HepG2 (cell line): ENCODE measurements at regions of chr4 and their contacts with region 1.

Region 1: DNA sequence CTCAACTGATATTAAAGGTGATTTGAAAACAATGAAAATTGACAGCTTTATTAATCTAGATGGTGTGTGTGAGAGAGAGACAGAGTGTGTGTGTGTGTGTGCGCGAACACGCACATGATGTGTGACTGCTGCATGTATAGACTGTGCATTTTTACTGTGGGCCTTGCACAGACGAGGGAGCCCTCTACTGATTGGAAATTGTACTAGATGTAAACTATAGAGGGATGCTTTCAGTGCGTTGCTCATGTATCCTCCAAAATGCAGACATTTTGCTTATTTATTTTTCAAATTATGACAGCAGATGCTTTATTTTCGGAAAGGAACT is 168.4 kb upstream of the GK2 start:
- DNase-seq: peak; percentile 21
- ATAC-seq: peak; percentile 93
- H3K4me3 ChIP-seq: no peak overlapping the region
- H3K27ac ChIP-seq: no peak overlapping the region
- H3K4me1 ChIP-seq: no peaks in the 10 kb centered on the region
- H3K27me3 ChIP-seq: no peaks in the 10 kb centered on the region
- CTCF ChIP-seq: peak; percentile 61
- EP300 ChIP-seq: no peak
- POLR2A ChIP-seq: no peak
- RAD21 ChIP-seq: no peak

Region 2: DNA sequence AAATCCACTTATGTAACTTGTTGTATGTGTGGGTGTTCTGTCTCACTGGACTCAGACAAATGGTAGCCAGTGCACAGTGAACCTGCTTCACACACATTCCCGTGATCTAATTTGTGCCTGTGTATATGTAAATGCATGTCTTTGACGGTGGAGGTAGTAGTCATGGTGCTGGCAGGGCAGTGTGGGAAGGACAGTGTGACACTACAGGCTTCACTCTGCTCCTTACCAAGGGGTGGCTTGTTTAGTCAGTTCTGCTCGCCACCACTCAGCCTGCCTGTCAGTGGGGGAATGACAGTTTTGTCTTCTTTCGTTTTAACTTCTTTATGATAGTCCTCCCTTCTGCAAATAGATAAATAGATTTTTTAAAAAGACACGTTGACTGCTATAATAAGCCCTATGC is 619.4 kb before region 1 on chr4:
- CTCF ChIA-PET with region 1: interaction called, 11 read pairs
- POLR2A ChIA-PET with region 1: no interaction called
- in situ Hi-C with region 1: loop called (anchors 5 kb)
- intact Hi-C with region 1: loop called (anchors 1 kb)
- DNase-seq: no peak
- ATAC-seq: peak; percentile 89
- H3K4me3 ChIP-seq: no peak overlapping the region
- H3K27ac ChIP-seq: no peak overlapping the region
- H3K4me1 ChIP-seq: no peaks in the 10 kb centered on the region
- H3K27me3 ChIP-seq: peaks cover 0 to 8% of the 10 kb centered on the region in 2 experiments; a peak in 1 of 5 replicates
- CTCF ChIP-seq: no peak
- EP300 ChIP-seq: no peak
- POLR2A ChIP-seq: no peak
- RAD21 ChIP-seq: no peak

Region 3: DNA sequence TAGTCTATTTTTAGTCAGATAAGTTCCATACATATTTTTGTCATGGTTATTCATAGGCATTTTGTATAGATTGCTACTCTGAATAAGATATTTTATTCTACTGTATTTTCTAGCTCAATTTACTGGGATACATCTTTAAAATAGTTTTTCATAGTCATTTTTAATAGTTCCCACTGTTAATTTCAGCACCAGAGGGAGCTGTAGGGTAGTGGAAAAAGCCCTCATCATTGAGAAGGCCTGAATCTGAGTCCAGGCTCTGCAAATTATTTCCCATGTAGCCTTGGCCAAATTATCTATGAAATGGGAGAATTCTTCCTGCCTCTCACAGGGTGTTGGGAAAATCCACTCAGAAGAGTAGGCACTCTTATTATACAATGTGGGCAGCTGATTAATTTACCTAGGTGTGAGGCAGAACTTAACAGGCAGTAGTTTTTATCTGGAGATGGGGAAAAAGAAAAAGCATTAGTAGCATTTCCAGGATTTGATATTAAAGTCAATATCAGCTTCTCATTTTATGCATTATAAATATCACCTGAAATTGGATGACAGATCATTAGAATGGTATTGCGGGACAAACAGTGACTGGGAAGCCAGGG is 534.2 kb before region 1 on chr4:
- CTCF ChIA-PET with region 1: interaction called, 3 read pairs
- POLR2A ChIA-PET with region 1: no interaction called
- in situ Hi-C with region 1: loop called (anchors 25 kb)
- intact Hi-C with region 1: no loop called
- DNase-seq: peak; percentile 3
- ATAC-seq: peak; percentile 45; the same call in 1 of the 3 replicates
- H3K4me3 ChIP-seq: no peak overlapping the region
- H3K27ac ChIP-seq: no peak overlapping the region
- H3K4me1 ChIP-seq: no peaks in the 10 kb centered on the region
- H3K27me3 ChIP-seq: no peaks in the 10 kb centered on the region; a peak in 1 of 5 replicates
- CTCF ChIP-seq: peak; percentile 44
- EP300 ChIP-seq: no peak
- POLR2A ChIP-seq: no peak
- RAD21 ChIP-seq: no peak

Region 4: DNA sequence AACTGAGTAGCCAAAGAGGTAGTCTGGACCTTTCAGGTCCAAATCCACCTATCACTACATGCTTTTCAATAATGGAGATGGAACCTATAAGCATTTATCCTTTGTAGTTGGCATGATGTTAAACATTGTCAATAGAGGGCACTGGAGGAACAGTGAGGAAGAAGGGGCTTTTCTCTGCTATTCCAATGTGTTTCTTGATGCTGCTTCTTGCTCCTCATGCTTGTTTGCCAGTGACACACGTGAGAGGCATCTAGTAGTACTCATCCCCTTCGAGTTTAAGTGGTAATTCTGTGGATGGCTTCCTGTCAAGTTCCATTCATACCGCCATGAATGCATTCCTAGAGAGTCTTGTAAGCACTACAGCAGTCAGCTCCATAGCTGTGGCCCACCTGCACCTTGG is 334.5 kb before region 1 on chr4:
- CTCF ChIA-PET with region 1: no interaction called
- POLR2A ChIA-PET with region 1: no interaction called
- in situ Hi-C with region 1: no loop called
- intact Hi-C with region 1: loop called (anchors 1 kb)
- DNase-seq: no peak
- ATAC-seq: no peak
- H3K4me3 ChIP-seq: no peak overlapping the region
- H3K27ac ChIP-seq: no peak overlapping the region
- H3K4me1 ChIP-seq: no peaks in the 10 kb centered on the region
- H3K27me3 ChIP-seq: no peaks in the 10 kb centered on the region; a peak in 1 of 5 replicates
- CTCF ChIP-seq: peak; percentile 19; the same call in 1 of the 2 replicates
- EP300 ChIP-seq: no peak
- POLR2A ChIP-seq: no peak
- RAD21 ChIP-seq: no peak

Region 5: DNA sequence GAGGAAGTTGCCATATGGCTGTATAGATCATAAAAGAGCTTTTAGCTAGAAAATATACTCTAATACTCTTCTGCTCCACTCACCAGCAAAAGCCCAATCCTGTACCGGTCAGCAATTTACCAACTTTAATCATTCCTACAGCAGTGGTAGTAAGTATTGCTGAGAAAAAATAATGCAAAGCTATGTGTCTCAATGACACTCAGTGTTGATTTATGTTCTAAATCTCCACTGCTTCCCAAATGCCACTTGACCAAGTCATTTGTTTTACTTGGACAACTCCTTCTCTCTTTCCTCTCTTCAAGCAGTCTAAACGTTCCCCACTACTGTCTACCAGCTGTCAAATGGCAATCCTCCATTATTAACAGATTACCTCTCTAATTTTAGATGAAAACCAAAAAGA is 33.4 kb after region 1 on chr4:
- CTCF ChIA-PET with region 1: no interaction called
- POLR2A ChIA-PET with region 1: no interaction called
- in situ Hi-C with region 1: no loop called
- intact Hi-C with region 1: no loop called
- DNase-seq: no peak
- ATAC-seq: no peak
- H3K4me3 ChIP-seq: no peak overlapping the region
- H3K27ac ChIP-seq: no peak overlapping the region
- H3K4me1 ChIP-seq: no peaks in the 10 kb centered on the region
- H3K27me3 ChIP-seq: no peaks in the 10 kb centered on the region
- CTCF ChIP-seq: no peak
- EP300 ChIP-seq: no peak
- POLR2A ChIP-seq: no peak
- RAD21 ChIP-seq: no peak

Region 6: DNA sequence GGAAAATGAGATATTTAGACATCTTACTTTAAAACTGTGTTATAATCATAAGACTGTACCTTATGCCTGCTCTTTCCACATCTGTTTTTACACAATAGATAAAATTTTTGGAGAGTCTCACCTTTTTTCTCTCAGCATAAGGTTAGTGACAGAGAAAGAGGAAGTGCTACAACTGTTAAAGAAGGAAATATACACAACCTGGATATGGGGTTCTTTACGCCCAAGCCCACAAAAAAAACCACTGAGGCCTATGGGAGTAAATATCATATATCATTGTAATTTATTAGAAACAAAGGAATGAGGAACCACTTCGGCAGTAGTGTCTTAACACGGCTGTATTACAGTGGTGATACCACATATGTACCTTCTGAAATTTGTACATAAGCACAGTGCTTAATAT is 97.5 kb after region 1 on chr4:
- CTCF ChIA-PET with region 1: no interaction called
- POLR2A ChIA-PET with region 1: no interaction called
- in situ Hi-C with region 1: no loop called
- intact Hi-C with region 1: no loop called
- DNase-seq: no peak
- ATAC-seq: no peak
- H3K4me3 ChIP-seq: no peak overlapping the region
- H3K27ac ChIP-seq: no peak overlapping the region
- H3K4me1 ChIP-seq: no peaks in the 10 kb centered on the region
- H3K27me3 ChIP-seq: no peaks in the 10 kb centered on the region
- CTCF ChIP-seq: no peak
- EP300 ChIP-seq: no peak
- POLR2A ChIP-seq: no peak
- RAD21 ChIP-seq: no peak